ENCODE measurements at regions of chr14 and their contacts with region 1.

Region 1: DNA sequence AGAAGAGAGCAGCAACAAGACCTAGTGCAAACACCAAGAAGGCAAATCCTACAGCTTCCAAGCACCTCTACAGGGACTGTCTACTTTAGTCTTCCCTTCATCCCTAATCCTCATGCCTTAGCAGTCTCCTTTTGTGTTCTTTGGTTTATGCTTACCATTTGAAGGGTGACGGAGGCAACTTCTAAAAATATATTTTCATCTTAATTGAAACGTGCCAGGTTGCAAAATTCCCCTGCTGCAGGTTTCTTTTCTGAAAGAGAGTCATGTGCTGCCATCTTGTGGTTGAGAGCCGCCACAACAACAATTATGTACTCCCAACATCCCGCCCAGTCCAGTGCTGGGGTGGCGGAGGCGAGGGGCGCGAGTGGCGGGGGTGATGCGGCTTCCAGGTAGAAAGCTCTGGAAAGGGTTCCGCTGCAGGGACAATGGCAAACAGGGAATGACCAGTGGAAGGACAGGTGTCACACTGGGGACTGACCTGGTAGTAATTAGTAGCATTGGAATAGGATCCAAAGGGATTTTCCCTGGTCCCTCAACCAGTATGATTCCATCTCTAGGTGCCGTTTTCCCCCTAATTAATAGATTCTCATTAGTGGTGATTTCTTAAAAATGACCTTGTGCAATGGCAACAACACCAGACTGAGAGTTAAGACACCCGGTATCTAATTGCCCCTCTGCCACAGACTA is 80.3 kb upstream of the GNG2 start:
- DNase-seq: peak; percentile 65 to 81
- ATAC-seq: peak; percentile 53 to 87 (median 71)
- H3K4me3 ChIP-seq: no peak overlapping the region
- H3K27ac ChIP-seq: no peak overlapping the region
- H3K4me1 ChIP-seq: no peaks in the 10 kb centered on the region
- H3K27me3 ChIP-seq: peaks cover 0 to under 1% (median 0%) of the 10 kb centered on the region in 3 donors
- CTCF ChIP-seq: peak; percentile 86

Region 2: DNA sequence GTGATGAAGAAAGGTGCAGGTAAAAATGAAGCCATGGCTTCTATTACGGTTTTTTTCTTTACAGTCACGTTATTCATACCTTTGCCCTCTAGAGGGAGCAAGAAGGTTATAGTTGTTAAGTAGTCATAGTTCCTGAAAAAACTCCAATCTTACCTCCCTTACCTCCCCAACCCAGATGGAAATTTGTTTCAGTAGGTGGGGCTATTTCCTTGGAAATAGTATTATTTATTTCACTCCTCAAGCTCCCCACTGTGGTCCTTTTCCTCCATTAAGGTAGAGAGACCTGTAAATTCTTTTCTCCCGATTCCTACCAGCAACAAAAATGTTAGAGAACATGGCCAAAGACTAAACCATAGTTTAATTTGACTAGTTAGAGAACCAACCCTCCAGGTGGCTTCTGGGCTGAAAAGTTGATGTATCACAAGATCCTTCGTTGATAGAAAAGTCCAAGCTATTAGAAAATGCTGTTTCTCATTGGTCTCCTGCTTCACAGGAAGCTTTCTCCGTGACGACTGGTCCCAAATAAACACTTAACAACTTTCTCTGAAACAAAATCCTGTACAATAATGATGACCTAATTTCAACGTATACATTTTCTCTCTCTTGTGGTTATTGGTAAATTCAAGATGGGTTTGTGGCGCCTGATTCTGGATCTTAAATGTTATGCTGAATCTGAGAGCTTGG is 496.6 kb before region 1 on chr14:
- intact Hi-C with region 1: loop called (anchors 1 to 2 kb)
- DNase-seq: no peak
- ATAC-seq: peak; percentile 71 to 89 (median 78)
- H3K4me3 ChIP-seq: no peak overlapping the region
- H3K27ac ChIP-seq: no peak overlapping the region
- H3K4me1 ChIP-seq: no peaks in the 10 kb centered on the region
- H3K27me3 ChIP-seq: no peaks in the 10 kb centered on the region
- CTCF ChIP-seq: peak; percentile 81

Region 3: GRCh38 chr14:51651388-51652167 is 128.6 kb before region 1 on chr14 and contains the start of gene FRMD6:
- intact Hi-C with region 1: loop called in 1 of 2 experiments (anchors 5 kb)
- DNase-seq: peak; percentile 91 to 94
- ATAC-seq: peak; percentile 91 to 96 (median 92)
- H3K4me3 ChIP-seq: peak within 1 kb of the TSS; percentile 86
- H3K27ac ChIP-seq: peak within 1 kb of the TSS; percentile 91
- H3K4me1 ChIP-seq: no peaks in the 10 kb centered on the region
- H3K27me3 ChIP-seq: no peaks in the 10 kb centered on the region
- CTCF ChIP-seq: peak; percentile 72
- total RNA-seq, gene FRMD6: 5.0 to 9.8 (median 5.9) TPM

Region 4: GRCh38 chr14:51979088-51979709 is 199.1 kb after region 1 on chr14:
- intact Hi-C with region 1: loop called in 1 of 2 experiments (anchors 5 kb)
- DNase-seq: peak; percentile 73 to 84
- ATAC-seq: peak; percentile 56 to 85 (median 65)
- H3K4me3 ChIP-seq: no peak overlapping the region
- H3K27ac ChIP-seq: no peak overlapping the region
- H3K4me1 ChIP-seq: no peaks in the 10 kb centered on the region
- H3K27me3 ChIP-seq: no peaks in the 10 kb centered on the region
- CTCF ChIP-seq: peak; percentile 91